ENCODE measurements at regions of chr15 and their contacts with region 1.

Region 1: DNA sequence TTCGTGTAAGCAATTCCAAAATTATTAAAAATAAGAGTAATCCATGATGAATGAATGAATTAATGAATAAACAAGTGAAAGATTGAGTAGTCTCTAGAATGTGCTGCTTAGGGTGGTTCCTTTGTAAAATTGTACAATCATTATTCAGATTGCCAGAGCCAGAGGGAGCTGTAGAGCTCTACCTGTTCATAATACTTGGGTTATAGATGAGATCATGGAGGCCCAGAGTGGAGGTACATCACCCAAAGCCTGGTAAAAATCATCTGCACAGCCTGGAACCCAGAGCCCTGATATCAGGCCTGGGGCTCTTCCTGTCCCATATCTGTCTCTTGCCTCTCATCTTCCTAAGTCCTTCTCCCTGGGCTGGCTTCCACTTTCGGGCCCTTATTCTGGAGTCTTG is 297.2 kb downstream of the RPLP1 start:
- DNase-seq: no peak
- ATAC-seq: peak; percentile 30
- H3K4me3 ChIP-seq: no peak overlapping the region
- H3K27ac ChIP-seq: no peak overlapping the region
- H3K4me1 ChIP-seq: peaks cover 2% of the 10 kb centered on the region
- H3K27me3 ChIP-seq: peaks cover 0 to 2% of the 10 kb centered on the region in 2 experiments; a peak in 2 of 4 replicates
- CTCF ChIP-seq: peak in 2 of 3 experiments; percentile 7 to 28; a peak in 2 of 6 replicates
- EP300 ChIP-seq: no peak
- POLR2A ChIP-seq: no peak
- RAD21 ChIP-seq: 0 out of 2 replicates have a peak, but pooled peaks have one; percentile 15

Region 2: DNA sequence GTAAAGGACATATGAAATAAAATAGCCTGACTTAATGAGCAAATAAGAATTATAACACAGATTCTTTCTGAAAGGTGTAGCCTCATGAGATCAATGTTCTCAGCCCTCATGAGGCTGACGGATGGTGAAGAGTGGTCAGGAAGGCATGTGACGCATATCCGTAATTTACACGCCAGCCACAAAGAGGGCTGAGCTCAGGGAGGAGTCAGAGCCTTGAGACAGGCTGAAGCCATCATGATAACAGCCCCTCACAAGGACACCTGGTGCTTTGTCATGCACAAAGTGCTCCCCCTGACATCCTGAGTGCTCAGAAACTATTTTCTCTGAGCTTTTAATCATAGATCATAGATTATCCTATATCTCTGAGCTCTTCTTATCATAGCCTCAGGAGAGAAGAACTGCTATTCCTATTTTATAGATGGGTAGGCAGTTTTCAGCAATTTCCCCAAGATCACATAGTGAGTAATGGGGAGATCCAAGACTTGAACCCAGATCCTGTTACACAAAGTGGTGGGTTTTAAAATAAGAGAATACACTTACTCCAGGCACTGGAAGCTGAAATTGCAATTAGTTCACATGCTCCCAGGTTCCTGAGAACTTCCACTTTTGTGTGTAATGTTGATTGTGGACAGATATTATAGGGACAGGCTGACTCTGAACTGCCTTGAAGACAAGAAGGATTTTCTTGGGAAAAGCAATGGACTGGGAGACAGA is 30.1 kb before region 1 on chr15:
- CTCF ChIA-PET with region 1: interaction called, 4 read pairs
- POLR2A ChIA-PET with region 1: interaction called, 4 read pairs
- RAD21 ChIA-PET with region 1: interaction called, 6 read pairs
- SMC1A ChIA-PET with region 1: interaction called, 11 read pairs
- in situ Hi-C with region 1: no loop called
- intact Hi-C with region 1: no loop called
- DNase-seq: no peak
- ATAC-seq: peak; percentile 86
- H3K4me3 ChIP-seq: no peak overlapping the region
- H3K27ac ChIP-seq: no peak overlapping the region
- H3K4me1 ChIP-seq: peaks cover 22% of the 10 kb centered on the region
- H3K27me3 ChIP-seq: no peaks in the 10 kb centered on the region
- CTCF ChIP-seq: no peak
- EP300 ChIP-seq: peak in 1 of 2 experiments; percentile 19; a peak in 1 of 4 replicates
- POLR2A ChIP-seq: no peak
- RAD21 ChIP-seq: no peak

Region 3: DNA sequence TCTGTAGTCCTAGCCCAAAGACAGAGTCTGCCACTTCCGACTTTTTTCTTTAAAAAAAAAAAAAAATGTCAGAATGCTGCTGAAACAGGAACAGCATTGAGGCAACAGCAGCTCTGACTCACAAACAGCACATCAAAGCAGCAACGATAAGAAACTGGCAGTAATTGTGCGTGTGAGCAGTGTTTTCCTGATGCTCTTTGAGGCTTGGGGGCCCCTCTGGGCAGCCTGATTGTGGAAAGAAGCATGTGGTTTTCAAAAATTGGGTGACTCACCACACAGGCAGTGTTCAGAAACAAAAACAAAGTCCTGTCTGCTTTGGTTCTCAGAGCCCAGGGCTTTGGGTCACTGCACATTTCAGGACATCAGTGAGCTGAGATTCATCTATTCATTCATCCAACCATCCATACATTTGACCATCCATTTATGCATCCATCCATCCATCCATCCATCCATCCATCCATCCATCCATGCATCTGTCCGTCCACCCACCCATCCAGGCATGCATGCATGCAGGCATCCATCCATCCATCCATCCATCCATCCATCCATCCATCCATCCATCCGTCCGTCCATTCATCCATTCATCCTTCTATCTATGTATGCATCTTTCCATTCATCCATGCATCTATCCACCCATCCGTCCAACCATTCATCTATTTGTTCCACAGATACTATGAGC is 11.2 kb after region 1 on chr15:
- CTCF ChIA-PET with region 1: interaction called, 6 read pairs
- POLR2A ChIA-PET with region 1: no interaction called
- RAD21 ChIA-PET with region 1: interaction called, 10 read pairs
- SMC1A ChIA-PET with region 1: interaction called, 10 read pairs
- in situ Hi-C with region 1: no loop called
- intact Hi-C with region 1: no loop called
- DNase-seq: peak; percentile 62
- ATAC-seq: peak; percentile 87
- H3K4me3 ChIP-seq: no peak overlapping the region
- H3K27ac ChIP-seq: no peak overlapping the region
- H3K4me1 ChIP-seq: peaks cover 29% of the 10 kb centered on the region
- H3K27me3 ChIP-seq: peaks cover 0 to 3% of the 10 kb centered on the region in 2 experiments; a peak in 1 of 4 replicates
- CTCF ChIP-seq: no peak
- EP300 ChIP-seq: peak; percentile 40 to 65; a peak in 2 of 4 replicates
- POLR2A ChIP-seq: no peak
- RAD21 ChIP-seq: no peak

Region 4: DNA sequence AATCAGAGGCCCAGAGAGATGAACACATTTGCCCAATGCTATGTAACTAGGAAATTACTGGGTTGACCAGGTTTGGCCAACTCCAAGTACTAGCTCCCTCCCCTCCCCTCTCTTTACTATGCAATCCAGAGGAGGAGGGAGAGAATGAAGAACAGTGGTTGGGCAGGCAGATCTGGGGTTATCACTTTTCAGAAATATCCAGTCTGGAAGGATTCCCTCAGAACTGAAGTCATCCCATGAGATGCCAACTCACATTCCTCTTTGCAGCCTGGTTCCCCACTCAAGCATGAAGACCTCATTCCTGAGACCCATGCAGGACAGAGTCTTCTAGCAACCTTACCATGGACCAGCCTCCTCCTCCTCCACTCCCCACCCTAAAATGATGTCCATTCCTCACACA is 146.8 kb after region 1 on chr15:
- CTCF ChIA-PET with region 1: no interaction called
- POLR2A ChIA-PET with region 1: no interaction called
- RAD21 ChIA-PET with region 1: no interaction called
- SMC1A ChIA-PET with region 1: no interaction called
- in situ Hi-C with region 1: no loop called
- intact Hi-C with region 1: no loop called
- DNase-seq: no peak
- ATAC-seq: no peak
- H3K4me3 ChIP-seq: no peak overlapping the region
- H3K27ac ChIP-seq: no peak overlapping the region
- H3K4me1 ChIP-seq: no peaks in the 10 kb centered on the region
- H3K27me3 ChIP-seq: peaks cover 0 to 3% of the 10 kb centered on the region in 2 experiments; a peak in 2 of 4 replicates
- CTCF ChIP-seq: no peak
- EP300 ChIP-seq: no peak
- POLR2A ChIP-seq: no peak
- RAD21 ChIP-seq: no peak